Activated CD4-positive, alpha-beta T cell treated with anti-CD3 and anti-CD28 coated beads for 36 hours (primary cell): ENCODE measurements at regions of chr2 and their contacts with region 1.

Region 1: GRCh38 chr2:230942920-230943896 is 18.2 kb upstream of the GPR55 start:
- DNase-seq: peak; percentile 78
- ATAC-seq: peak; percentile 78
- H3K4me3 Mint-ChIP-seq: peak overlapping the region; percentile 61
- H3K27ac Mint-ChIP-seq: peak overlapping the region; percentile 75
- H3K4me1 Mint-ChIP-seq: peaks cover 27% of the 10 kb centered on the region
- H3K27me3 Mint-ChIP-seq: peaks cover 4% of the 10 kb centered on the region

Region 2: DNA sequence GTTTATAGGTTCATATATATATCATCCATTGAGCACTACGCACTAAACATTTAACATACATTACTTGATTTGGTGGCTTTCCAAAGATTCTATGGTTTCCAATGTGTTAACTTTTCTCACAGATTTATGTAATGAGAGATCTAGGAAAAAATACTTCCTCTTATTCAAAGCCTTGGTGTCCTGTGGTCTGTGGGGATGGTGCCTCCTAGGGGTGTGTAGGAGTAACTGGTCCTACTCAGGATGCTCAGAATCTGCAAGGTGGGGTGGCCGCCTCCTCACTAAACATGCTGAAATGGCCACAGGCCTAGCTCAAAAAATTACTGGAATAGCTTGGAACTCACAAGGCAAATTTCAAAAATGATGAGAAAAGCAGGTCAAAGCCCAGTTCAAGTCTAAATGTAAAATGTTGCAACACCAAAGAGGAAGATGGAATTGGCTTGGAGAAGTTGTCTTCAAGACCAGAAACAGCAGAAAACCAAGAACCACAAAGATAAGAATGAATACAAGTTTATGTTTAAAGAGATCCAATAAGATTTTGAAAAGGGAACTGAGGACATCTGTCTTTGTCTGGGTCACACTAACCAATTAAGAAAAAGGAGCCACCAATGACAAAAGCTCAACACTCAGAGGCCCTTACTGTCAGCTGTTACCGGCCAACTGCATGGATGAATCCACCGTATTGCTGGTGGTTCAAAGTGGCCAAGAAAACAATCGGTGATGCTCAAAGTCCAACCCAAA is 29.6 kb before region 1 on chr2:
- CTCF ChIA-PET with region 1: interaction called, 3 read pairs
- POLR2A ChIA-PET with region 1: no interaction called
- intact Hi-C with region 1: loop called in 1 of 2 experiments (anchors 5 kb)
- DNase-seq: peak; percentile 50
- ATAC-seq: no peak
- H3K4me3 Mint-ChIP-seq: no peak overlapping the region
- H3K27ac Mint-ChIP-seq: no peak overlapping the region
- H3K4me1 Mint-ChIP-seq: peaks cover 60% of the 10 kb centered on the region
- H3K27me3 Mint-ChIP-seq: peaks cover 5% of the 10 kb centered on the region

Region 3: GRCh38 chr2:230995821-230996220 is 52.6 kb after region 1 on chr2 and contains the start of gene SPATA3:
- CTCF ChIA-PET with region 1: no interaction called
- POLR2A ChIA-PET with region 1: no interaction called
- intact Hi-C with region 1: no loop called
- DNase-seq: no peak
- ATAC-seq: no peak
- H3K4me3 Mint-ChIP-seq: no peak within 1 kb of the TSS
- H3K27ac Mint-ChIP-seq: no peak within 1 kb of the TSS
- H3K4me1 Mint-ChIP-seq: no peaks in the 10 kb centered on the region
- H3K27me3 Mint-ChIP-seq: peaks cover 47% of the 10 kb centered on the region
- total RNA-seq, gene SPATA3: 1.1 to 1.3 TPM